Panc1 (cell line): ENCODE measurements at regions of chr1 and their contacts with region 1.

Region 1: GRCh38 chr1:113835642-113836307 is 23.5 kb upstream of the RSBN1 start:
- DNase-seq: no peak
- ATAC-seq: no peak
- H3K4me3 ChIP-seq: no peak overlapping the region
- H3K27ac ChIP-seq: no peak overlapping the region
- H3K4me1 ChIP-seq: no peaks in the 10 kb centered on the region
- H3K27me3 ChIP-seq: no peaks in the 10 kb centered on the region
- CTCF ChIP-seq: peak; percentile 15; the same call in 1 of the 2 replicates

Region 2: DNA sequence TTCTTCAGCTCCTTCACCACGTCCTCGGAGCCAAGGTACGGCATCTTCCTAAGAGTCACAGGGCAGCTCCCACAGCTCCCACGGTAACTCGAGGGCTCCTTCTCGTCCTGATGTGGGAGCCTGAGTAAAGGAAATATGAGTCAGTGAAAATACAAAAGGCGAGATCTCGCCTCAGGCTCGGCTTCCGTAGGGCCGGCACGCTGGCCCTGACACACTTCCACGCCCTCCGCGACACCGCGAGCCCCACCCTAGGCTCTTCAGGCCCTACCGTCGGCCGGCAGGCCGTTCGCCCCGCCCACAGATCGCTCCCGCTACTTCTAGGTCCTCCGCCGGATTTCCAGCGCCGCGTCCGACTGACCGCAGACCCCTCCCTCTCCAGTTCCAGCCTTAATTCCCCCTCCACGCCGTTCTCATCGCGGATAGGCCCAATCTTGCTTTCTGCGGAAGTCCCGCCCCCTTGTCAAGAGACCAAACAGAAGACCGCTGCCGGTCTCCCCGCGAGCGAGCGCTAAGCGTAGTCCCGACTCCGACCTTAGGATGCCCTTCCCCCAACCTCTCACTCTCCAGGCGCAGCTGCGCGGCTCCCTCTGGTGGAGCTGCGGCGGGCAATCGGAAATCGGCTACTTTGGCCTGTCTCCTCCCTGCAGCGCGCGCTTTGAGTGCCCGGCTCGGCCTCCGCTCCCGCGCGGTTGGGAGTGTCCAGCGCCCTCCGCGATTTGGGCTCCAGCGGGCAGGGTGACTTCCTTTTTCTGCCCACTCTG is 69.1 kb after region 1 on chr1 and contains the starts of genes AP4B1 and DCLRE1B:
- CTCF ChIA-PET with region 1: no interaction called
- POLR2A ChIA-PET with region 1: no interaction called
- in situ Hi-C with region 1: no loop called
- intact Hi-C with region 1: loop called (anchors 10 kb)
- DNase-seq: peak; percentile 96
- ATAC-seq: peak; percentile 97
- H3K4me3 ChIP-seq: peak within 1 kb of the TSS; percentile 84 to 93
- H3K27ac ChIP-seq: peak within 1 kb of the TSS; percentile 94
- H3K4me1 ChIP-seq: peaks cover 4% of the 10 kb centered on the region
- H3K27me3 ChIP-seq: no peaks in the 10 kb centered on the region
- CTCF ChIP-seq: peak; percentile 75
- total RNA-seq, gene AP4B1: 14.2 TPM
- total RNA-seq, gene DCLRE1B: 8.6 TPM